ENCODE measurements at regions of chr17 and their contacts with region 1.

Region 1: DNA sequence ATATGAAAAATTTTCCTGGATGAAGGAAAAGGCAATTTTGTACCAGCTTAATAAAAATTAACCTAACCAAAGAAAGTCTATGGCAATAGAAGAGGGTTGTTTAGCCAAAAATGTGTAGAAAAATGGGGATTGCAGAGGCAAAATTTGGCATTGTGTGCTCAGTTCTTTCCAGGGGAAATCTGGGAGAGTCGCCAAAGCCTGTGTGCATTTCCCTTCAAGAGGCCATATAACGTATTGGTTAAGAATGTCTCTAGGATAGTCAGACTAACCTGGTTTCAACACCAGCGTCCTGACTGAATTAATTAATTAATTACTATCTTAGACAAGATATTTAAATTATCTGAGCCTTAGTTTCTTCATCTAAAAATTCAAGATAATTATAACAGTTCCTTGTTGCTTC is 44.8 kb upstream of the HLF start:
- DNase-seq: no peak
- ATAC-seq: no peak
- H3K4me3 ChIP-seq: no peak overlapping the region
- H3K27ac ChIP-seq: no peak overlapping the region
- H3K4me1 ChIP-seq: no peaks in the 10 kb centered on the region
- H3K27me3 ChIP-seq: no peaks in the 10 kb centered on the region
- CTCF ChIP-seq: no peak

Region 2: DNA sequence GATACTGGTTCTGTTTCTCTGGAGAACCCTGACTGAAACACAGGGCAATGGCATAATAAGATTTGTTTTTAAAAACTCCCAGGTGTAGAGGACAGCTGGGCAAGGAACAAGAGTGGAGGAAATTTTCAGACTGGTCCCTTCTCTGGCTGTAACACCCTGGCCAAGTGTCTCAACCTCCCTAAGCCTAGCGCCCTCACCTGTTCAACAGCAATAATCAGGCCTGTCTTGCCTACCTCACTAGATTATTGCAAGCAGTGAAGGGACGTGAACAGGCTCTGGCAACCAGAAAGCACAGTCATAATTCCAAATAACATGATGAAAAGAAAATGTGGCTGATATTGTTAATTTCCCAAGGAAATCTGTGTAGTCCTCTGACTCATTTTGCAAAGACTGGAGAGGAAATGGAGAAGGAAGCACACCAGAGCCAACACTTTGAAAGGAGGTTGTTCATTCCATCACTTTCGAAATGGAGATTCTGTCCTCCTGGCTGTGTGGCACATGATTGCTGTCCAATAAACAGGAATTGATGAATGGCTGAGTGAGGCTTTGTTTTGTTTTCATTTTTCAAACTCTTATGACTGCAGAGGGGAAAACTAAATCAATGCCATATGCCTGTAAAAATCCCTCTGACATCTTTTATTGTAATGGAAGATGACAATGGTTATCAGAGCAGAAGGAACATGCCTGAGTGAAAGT is 42.6 kb before region 1 on chr17:
- intact Hi-C with region 1: no loop called
- DNase-seq: no peak
- ATAC-seq: no peak
- H3K4me3 ChIP-seq: no peak overlapping the region
- H3K27ac ChIP-seq: no peak overlapping the region
- H3K4me1 ChIP-seq: no peaks in the 10 kb centered on the region
- H3K27me3 ChIP-seq: no peaks in the 10 kb centered on the region
- CTCF ChIP-seq: no peak

Region 3: GRCh38 chr17:55295411-55296170 is 75.7 kb after region 1 on chr17:
- intact Hi-C with region 1: no loop called
- DNase-seq: peak in 1 of 2 donors; percentile 42
- ATAC-seq: peak; percentile 73 to 92 (median 84)
- H3K4me3 ChIP-seq: no peak overlapping the region
- H3K27ac ChIP-seq: peak overlapping the region in 5 of 10 donors; percentile 25 to 42 (median 38)
- H3K4me1 ChIP-seq: peaks cover 0 to 30% (median 12%) of the 10 kb centered on the region in 9 donors
- H3K27me3 ChIP-seq: no peaks in the 10 kb centered on the region
- CTCF ChIP-seq: peak; percentile 80 to 89 (median 87)

Region 4: DNA sequence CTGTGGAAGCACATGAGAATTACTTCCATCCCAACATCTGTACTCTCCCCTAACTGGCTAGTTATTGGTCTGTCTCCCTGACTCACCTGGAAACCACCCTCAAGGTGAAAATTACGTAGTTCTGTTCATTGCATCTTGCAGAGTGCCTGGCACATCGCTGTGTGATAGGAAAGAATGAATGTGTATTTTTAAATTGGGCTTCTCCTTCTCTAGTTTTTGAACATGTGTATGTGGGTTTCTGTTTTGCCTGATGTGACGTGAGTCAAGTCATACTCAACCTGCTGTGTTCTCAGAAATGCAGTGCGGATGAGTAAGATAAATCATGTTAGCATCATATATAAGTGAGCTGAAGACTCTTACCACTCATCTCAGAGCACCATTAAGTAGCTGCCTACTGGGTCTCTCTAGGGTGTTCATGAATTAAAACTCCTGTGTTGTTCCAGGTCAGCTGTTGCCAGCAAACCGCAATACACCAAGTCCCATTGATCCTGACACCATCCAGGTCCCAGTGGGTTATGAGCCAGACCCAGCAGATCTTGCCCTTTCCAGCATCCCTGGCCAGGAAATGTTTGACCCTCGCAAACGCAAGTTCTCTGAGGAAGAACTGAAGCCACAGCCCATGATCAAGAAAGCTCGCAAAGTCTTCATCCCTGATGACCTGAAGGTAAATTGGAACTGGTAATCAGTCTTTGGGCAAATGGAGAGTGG is 95.0 kb after region 1 on chr17:
- intact Hi-C with region 1: no loop called
- DNase-seq: no peak
- ATAC-seq: no peak
- H3K4me3 ChIP-seq: no peak overlapping the region
- H3K27ac ChIP-seq: no peak overlapping the region
- H3K4me1 ChIP-seq: no peaks in the 10 kb centered on the region
- H3K27me3 ChIP-seq: no peaks in the 10 kb centered on the region
- CTCF ChIP-seq: no peak

Region 5: DNA sequence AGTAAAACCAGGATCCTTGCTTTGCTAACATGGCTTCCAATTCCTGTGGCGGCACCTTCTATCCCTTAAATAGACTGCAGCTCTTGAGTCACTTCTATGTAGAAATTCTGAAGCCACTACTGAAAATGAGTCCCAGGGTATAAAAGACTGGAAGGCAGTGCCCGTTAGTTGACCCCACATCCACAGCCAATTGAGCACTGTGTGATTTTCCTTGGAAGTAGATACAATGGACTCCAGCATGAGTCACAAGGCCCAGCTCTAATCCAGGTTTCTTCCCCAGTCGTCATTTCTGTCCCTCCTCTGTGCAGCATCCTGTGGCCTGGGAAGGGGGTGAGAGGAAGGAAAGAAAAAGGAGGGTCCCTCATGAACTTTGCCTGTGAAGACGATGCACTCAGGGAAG is 114.4 kb after region 1 on chr17:
- intact Hi-C with region 1: loop called in 1 of 10 experiments (anchors 10 kb)
- DNase-seq: no peak
- ATAC-seq: no peak
- H3K4me3 ChIP-seq: no peak overlapping the region
- H3K27ac ChIP-seq: no peak overlapping the region
- H3K4me1 ChIP-seq: no peaks in the 10 kb centered on the region
- H3K27me3 ChIP-seq: peaks cover 0 to under 1% (median 0%) of the 10 kb centered on the region in 7 donors
- CTCF ChIP-seq: no peak

Region 6: DNA sequence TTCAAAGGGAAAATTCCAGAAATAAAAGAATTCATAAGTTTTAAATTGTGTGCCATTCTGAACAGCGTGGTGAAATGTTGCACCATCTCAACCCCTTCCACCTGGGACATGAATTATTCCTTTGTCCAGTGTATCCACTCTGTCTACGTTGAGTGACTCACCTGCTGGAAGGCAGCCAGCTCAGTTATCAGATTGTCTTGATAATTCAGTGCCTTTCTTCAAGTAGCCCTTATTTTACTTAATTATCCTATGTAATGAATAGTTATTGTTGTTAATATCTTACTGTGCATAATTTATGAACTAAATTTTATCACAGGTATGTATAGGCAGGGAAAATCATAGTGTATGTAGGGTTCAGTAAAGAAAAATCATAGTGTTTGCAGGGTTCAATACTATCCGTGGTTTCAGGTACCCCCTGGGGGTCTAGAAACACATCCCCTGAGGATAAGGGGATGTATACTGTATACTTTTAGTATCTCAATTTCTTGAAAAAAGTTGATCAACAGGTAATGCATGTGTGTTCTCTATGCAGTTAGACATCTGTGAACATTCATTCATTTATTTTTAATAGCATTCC is 523.3 kb after region 1 on chr17:
- intact Hi-C with region 1: no loop called
- DNase-seq: no peak
- ATAC-seq: no peak
- H3K4me3 ChIP-seq: no peak overlapping the region
- H3K27ac ChIP-seq: no peak overlapping the region
- H3K4me1 ChIP-seq: no peaks in the 10 kb centered on the region
- H3K27me3 ChIP-seq: no peaks in the 10 kb centered on the region
- CTCF ChIP-seq: no peak

Measured in heart right ventricle (tissue), 16 donors.